CD8-positive, alpha-beta T cell (primary cell): ENCODE measurements at regions of chr3 and their contacts with region 1.

Region 1: GRCh38 chr3:67654099-67654843 is at the start of gene SUCLG2:
- DNase-seq: peak; percentile 56 to 89 (median 81)
- ATAC-seq: peak; percentile 66
- H3K4me3 ChIP-seq: peak within 1 kb of the TSS; percentile 78 to 91
- H3K4me3 Mint-ChIP-seq: peak within 1 kb of the TSS; percentile 86
- H3K27ac ChIP-seq: peak within 1 kb of the TSS; percentile 67 to 84
- H3K27ac Mint-ChIP-seq: peak within 1 kb of the TSS; percentile 91
- H3K4me1 ChIP-seq: peaks cover 55% of the 10 kb centered on the region
- H3K4me1 Mint-ChIP-seq: peaks cover 74% of the 10 kb centered on the region
- H3K27me3 ChIP-seq: no peaks in the 10 kb centered on the region
- H3K27me3 Mint-ChIP-seq: no peaks in the 10 kb centered on the region
- CTCF ChIP-seq: no peak
- total RNA-seq, gene SUCLG2: 39.1 to 40.9 TPM

Region 2: DNA sequence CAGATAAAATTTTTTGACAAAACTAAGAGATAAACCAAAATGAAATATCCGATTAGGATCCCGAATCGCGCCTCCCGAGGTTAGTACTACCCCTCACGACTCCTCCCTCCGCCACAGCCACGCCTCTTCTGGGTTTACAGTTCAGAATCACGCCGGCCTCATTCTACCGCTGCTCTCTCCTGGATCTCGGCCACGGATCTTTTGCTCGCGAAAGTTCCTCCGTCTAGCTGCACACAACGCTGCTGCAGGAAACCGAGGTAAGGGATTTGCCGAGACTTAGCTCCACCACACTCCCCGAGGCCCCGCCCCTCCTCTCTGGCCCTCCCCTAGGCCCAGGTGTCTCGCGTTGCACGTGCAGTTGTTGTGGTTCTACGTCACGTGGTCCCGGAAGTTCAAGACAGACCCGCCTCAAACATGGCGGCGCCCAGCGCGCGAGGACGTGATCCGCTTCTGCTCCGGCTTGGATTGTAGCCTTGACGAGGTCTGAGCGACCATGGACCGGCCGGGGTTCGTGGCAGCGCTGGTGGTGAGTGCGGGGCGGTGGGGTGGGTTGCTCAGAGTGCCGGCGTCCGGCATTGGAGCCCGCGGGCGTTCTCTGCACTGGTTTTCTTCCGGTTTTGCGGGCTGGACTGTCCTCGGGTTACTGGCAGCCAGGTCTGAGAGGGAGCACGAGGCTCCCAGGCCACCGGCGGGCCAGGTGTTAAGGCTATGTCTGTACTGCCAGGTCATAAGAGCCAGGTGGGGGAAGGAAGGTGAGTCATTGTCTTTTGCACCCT is 1433.5 kb before region 1 on chr3 and contains the start of gene SLC25A26:
- CTCF ChIA-PET with region 1: no interaction called
- POLR2A ChIA-PET with region 1: no interaction called
- intact Hi-C with region 1: loop called in 1 of 2 experiments (anchors 5 kb)
- DNase-seq: peak; percentile 94 to 99 (median 97)
- ATAC-seq: peak; percentile 98
- H3K4me3 ChIP-seq: peak within 1 kb of the TSS; percentile 73 to 91
- H3K4me3 Mint-ChIP-seq: peak within 1 kb of the TSS; percentile 90
- H3K27ac ChIP-seq: peak within 1 kb of the TSS; percentile 58 to 82
- H3K27ac Mint-ChIP-seq: peak within 1 kb of the TSS; percentile 90
- H3K4me1 ChIP-seq: peaks cover 14% of the 10 kb centered on the region
- H3K4me1 Mint-ChIP-seq: peaks cover 35% of the 10 kb centered on the region
- H3K27me3 ChIP-seq: no peaks in the 10 kb centered on the region
- H3K27me3 Mint-ChIP-seq: peaks cover 3% of the 10 kb centered on the region
- CTCF ChIP-seq: no peak
- total RNA-seq, gene SLC25A26: 32.0 to 37.4 TPM

Region 3: GRCh38 chr3:66326340-66326739 is 1327.9 kb before region 1 on chr3:
- CTCF ChIA-PET with region 1: no interaction called
- POLR2A ChIA-PET with region 1: no interaction called
- intact Hi-C with region 1: no loop called
- DNase-seq: no peak
- ATAC-seq: no peak
- H3K4me3 ChIP-seq: no peak overlapping the region
- H3K4me3 Mint-ChIP-seq: no peak overlapping the region
- H3K27ac ChIP-seq: no peak overlapping the region
- H3K27ac Mint-ChIP-seq: no peak overlapping the region
- H3K4me1 ChIP-seq: no peaks in the 10 kb centered on the region
- H3K4me1 Mint-ChIP-seq: peaks cover 22% of the 10 kb centered on the region
- H3K27me3 ChIP-seq: no peaks in the 10 kb centered on the region
- H3K27me3 Mint-ChIP-seq: no peaks in the 10 kb centered on the region
- CTCF ChIP-seq: no peak

Region 4: GRCh38 chr3:66998113-66998903 is 656.0 kb before region 1 on chr3 and contains the start of gene KBTBD8:
- CTCF ChIA-PET with region 1: no interaction called
- POLR2A ChIA-PET with region 1: no interaction called
- intact Hi-C with region 1: loop called (anchors 2 to 5 kb)
- DNase-seq: peak; percentile 92 to 99 (median 97)
- ATAC-seq: peak; percentile 94
- H3K4me3 ChIP-seq: peak within 1 kb of the TSS; percentile 62 to 94
- H3K4me3 Mint-ChIP-seq: peak within 1 kb of the TSS; percentile 86
- H3K27ac ChIP-seq: peak within 1 kb of the TSS; percentile 53 to 63
- H3K27ac Mint-ChIP-seq: peak within 1 kb of the TSS; percentile 92
- H3K4me1 ChIP-seq: peaks cover 10% of the 10 kb centered on the region
- H3K4me1 Mint-ChIP-seq: peaks cover 32% of the 10 kb centered on the region
- H3K27me3 ChIP-seq: no peaks in the 10 kb centered on the region
- H3K27me3 Mint-ChIP-seq: peaks cover 14% of the 10 kb centered on the region
- CTCF ChIP-seq: no peak
- total RNA-seq, gene KBTBD8: 9.5 to 12.1 TPM

Region 5: GRCh38 chr3:67739851-67740250 is 85.6 kb after region 1 on chr3:
- CTCF ChIA-PET with region 1: no interaction called
- POLR2A ChIA-PET with region 1: interaction called, 32 read pairs
- intact Hi-C with region 1: loop called in 1 of 2 experiments (anchors 2 kb)
- DNase-seq: no peak
- ATAC-seq: no peak
- H3K4me3 ChIP-seq: no peak overlapping the region
- H3K4me3 Mint-ChIP-seq: no peak overlapping the region
- H3K27ac ChIP-seq: peak overlapping the region in 1 of 2 experiments; percentile 27
- H3K27ac Mint-ChIP-seq: peak overlapping the region; percentile 93
- H3K4me1 ChIP-seq: peaks cover 60% of the 10 kb centered on the region
- H3K4me1 Mint-ChIP-seq: peaks cover 75% of the 10 kb centered on the region
- H3K27me3 ChIP-seq: no peaks in the 10 kb centered on the region
- H3K27me3 Mint-ChIP-seq: no peaks in the 10 kb centered on the region
- CTCF ChIP-seq: no peak

Region 6: GRCh38 chr3:67923796-67924195 is 269.5 kb after region 1 on chr3:
- CTCF ChIA-PET with region 1: no interaction called
- POLR2A ChIA-PET with region 1: no interaction called
- intact Hi-C with region 1: no loop called
- DNase-seq: no peak
- ATAC-seq: no peak
- H3K4me3 ChIP-seq: no peak overlapping the region
- H3K4me3 Mint-ChIP-seq: no peak overlapping the region
- H3K27ac ChIP-seq: no peak overlapping the region
- H3K27ac Mint-ChIP-seq: no peak overlapping the region
- H3K4me1 ChIP-seq: no peaks in the 10 kb centered on the region
- H3K4me1 Mint-ChIP-seq: no peaks in the 10 kb centered on the region
- H3K27me3 ChIP-seq: no peaks in the 10 kb centered on the region
- H3K27me3 Mint-ChIP-seq: no peaks in the 10 kb centered on the region
- CTCF ChIP-seq: no peak

Region 7: DNA sequence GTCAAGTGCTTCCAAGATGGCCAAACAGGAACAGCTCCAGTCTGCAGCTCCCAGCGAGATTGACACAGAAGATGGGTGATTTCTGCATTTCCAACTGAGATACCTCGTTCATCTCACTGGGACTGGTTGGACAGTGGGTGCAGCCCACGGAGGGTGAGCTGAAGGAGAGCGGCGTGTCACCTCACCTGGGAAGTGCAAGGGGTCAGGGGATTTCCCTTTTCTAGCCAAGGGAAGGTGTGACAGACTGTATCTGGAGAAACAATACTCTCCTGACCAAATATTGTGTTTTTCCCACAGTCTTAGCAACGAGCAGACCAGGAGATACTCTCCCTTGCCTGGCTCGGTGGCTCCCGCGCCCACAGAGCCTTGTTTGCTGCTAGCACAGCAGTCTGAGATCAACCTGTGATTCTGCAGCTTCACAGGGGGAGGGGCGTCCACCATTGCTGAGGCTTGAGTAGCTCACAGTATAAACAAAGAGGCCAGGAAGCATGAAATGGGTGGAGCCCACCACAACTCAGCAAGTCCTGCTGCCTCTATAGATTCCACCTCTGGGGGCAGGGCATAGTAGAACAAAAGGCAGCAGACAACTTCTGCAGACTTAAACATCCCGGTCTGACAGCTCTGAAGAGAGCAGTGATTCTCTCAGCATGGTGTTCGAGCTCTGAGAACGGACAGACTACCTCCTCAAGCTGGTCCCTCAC is 293.7 kb after region 1 on chr3:
- CTCF ChIA-PET with region 1: no interaction called
- POLR2A ChIA-PET with region 1: interaction called, 4 read pairs
- intact Hi-C with region 1: loop called (anchors 2 to 5 kb)
- DNase-seq: peak; percentile 50 to 89 (median 77)
- ATAC-seq: peak; percentile 95
- H3K4me3 ChIP-seq: peak overlapping the region; percentile 42 to 45
- H3K4me3 Mint-ChIP-seq: peak overlapping the region; percentile 84
- H3K27ac ChIP-seq: peak overlapping the region; percentile 2 to 32
- H3K27ac Mint-ChIP-seq: peak overlapping the region; percentile 92
- H3K4me1 ChIP-seq: peaks cover 20% of the 10 kb centered on the region
- H3K4me1 Mint-ChIP-seq: peaks cover 39% of the 10 kb centered on the region
- H3K27me3 ChIP-seq: no peaks in the 10 kb centered on the region
- H3K27me3 Mint-ChIP-seq: no peaks in the 10 kb centered on the region
- CTCF ChIP-seq: peak; percentile 18

Region 8: DNA sequence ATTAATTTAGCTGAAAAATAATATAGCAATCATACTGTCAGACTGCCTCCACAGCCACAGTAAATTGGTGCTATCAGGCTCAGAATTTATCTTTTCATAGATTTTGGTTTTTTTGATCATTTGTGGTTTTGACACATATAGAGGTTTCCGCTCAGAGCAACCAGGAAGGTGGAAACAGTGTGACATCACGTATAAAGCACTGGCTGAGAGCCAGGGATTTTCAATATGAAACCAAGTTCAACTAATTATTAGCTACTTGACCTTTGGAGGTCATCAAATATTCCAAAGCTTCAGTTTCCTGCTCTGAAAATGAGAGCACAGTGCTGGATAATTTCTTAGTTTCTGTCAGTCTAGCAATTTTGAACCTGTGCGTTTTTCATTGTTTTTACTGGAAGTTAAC is 433.9 kb after region 1 on chr3:
- CTCF ChIA-PET with region 1: no interaction called
- POLR2A ChIA-PET with region 1: no interaction called
- intact Hi-C with region 1: loop called (anchors 10 kb)
- DNase-seq: peak in 8 of 9 experiments; percentile 21 to 88 (median 58)
- ATAC-seq: peak; percentile 85
- H3K4me3 ChIP-seq: peak overlapping the region in 1 of 2 experiments; percentile 33
- H3K4me3 Mint-ChIP-seq: peak overlapping the region; percentile 45
- H3K27ac ChIP-seq: no peak overlapping the region
- H3K27ac Mint-ChIP-seq: peak overlapping the region; percentile 25
- H3K4me1 ChIP-seq: peaks cover 47% of the 10 kb centered on the region
- H3K4me1 Mint-ChIP-seq: peaks cover 65% of the 10 kb centered on the region
- H3K27me3 ChIP-seq: no peaks in the 10 kb centered on the region
- H3K27me3 Mint-ChIP-seq: peaks cover 2% of the 10 kb centered on the region
- CTCF ChIP-seq: no peak

Region 9: GRCh38 chr3:69200384-69201068 is 1546.3 kb after region 1 on chr3:
- CTCF ChIA-PET with region 1: no interaction called
- POLR2A ChIA-PET with region 1: no interaction called
- intact Hi-C with region 1: loop called in 1 of 2 experiments (anchors 10 kb)
- DNase-seq: peak in 2 of 9 experiments; percentile 24
- ATAC-seq: no peak
- H3K4me3 ChIP-seq: no peak overlapping the region
- H3K4me3 Mint-ChIP-seq: peak overlapping the region; percentile 88
- H3K27ac ChIP-seq: no peak overlapping the region
- H3K27ac Mint-ChIP-seq: peak overlapping the region; percentile 5
- H3K4me1 ChIP-seq: peaks cover 25% of the 10 kb centered on the region
- H3K4me1 Mint-ChIP-seq: peaks cover 41% of the 10 kb centered on the region
- H3K27me3 ChIP-seq: no peaks in the 10 kb centered on the region
- H3K27me3 Mint-ChIP-seq: no peaks in the 10 kb centered on the region
- CTCF ChIP-seq: no peak